ENCODE measurements at regions of chr11 and their contacts with region 1.

Region 1: DNA sequence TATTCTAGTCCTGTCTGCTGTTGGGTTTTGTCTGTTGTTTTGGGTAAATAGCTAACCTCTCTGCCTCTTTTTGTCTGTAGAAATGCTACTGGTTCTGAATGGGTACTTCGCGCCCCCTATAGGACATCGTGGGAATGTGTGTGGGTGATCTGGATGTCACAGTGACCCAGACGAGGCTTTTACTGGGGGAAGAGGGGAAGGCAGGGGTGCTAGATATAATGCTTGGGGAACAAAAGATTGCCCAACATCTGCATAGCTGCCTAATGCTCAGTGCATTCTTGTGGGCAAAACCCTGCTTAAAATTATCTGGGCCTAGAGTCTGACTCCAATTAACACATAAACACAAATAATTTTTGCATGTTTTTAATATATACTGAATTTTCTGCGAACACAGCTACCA is 57.7 kb downstream of the BMAL1 start:
- DNase-seq: no peak

Region 2: GRCh38 chr11:12330485-12331231 is 1004.7 kb before region 1 on chr11:
- intact Hi-C with region 1: no loop called
- DNase-seq: no peak

Region 3: DNA sequence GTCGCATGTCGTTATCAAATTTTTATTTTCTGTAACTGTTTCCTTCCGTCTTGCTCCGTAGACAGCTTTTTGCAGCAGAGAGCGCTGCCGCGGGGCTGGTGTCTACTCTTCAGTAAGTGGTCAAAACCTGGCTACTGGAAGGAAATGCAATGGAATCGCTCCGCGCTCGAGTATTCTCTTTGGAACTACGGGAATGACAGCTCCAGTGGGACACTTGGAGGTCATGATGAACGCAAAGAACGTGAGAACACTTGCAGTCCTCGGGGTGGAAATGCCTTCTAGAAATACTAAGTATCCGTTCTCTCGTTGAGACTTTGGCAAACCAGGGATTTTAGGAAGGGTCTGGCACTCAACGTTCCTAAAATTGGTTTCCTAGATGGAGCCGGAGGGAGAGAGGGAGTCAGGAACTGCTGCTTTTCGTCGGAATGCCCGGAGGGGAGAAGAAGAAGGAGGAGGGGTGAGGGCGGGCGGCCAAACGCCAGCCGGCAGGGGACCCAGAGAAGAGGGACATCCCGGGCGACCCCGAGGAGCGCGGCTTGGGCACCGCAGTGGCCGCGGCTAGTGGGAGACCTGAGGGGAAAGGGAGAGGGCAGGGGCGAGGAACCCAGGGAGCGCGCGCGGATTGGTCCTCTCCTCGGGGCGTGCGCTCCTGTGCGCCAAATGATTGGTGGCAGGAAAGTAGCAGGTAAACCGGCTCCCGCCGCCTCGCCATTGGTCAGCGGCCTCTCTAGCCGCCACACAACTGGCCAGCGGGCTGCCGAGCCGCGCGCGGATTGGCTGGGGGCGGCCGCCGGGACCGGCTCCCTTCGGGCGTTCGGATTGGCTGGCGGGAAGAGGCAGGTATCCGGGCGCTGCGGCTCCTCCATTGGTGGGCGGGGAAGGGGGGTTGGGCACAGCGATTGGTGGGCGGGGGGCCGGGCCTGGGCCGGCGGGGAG is 58.2 kb before region 1 on chr11:
- intact Hi-C with region 1: loop called (anchors 10 kb)
- DNase-seq: peak; percentile 99

Region 4: GRCh38 chr11:13289081-13289480 is 46.2 kb before region 1 on chr11:
- intact Hi-C with region 1: loop called in 1 of 2 experiments (anchors 10 kb)
- DNase-seq: no peak

Region 5: GRCh38 chr11:13429836-13430235 is 94.5 kb after region 1 on chr11:
- intact Hi-C with region 1: no loop called
- DNase-seq: no peak

Measured in posterior vena cava (tissue), 2 donors.